ENCODE measurements at regions of chr2 and their contacts with region 1.

Region 1: GRCh38 chr2:206765242-206766056 is at the starts of genes FASTKD2 and MDH1B:
- DNase-seq: peak; percentile 62 to 91 (median 85)
- ATAC-seq: peak; percentile 93
- H3K4me3 ChIP-seq: peak within 1 kb of the TSS; percentile 70
- H3K4me3 Mint-ChIP-seq: peak within 1 kb of the TSS in 8 of 10 donors; percentile 89 to 96 (median 94)
- H3K27ac ChIP-seq: peak within 1 kb of the TSS; percentile 95
- H3K27ac Mint-ChIP-seq: peak within 1 kb of the TSS; percentile 93 to 99 (median 97)
- H3K4me1 ChIP-seq: peaks cover 12 to 16% of the 10 kb centered on the region in 2 donors
- H3K4me1 Mint-ChIP-seq: peaks cover 13 to 46% (median 41%) of the 10 kb centered on the region in 7 donors
- H3K27me3 ChIP-seq: no peaks in the 10 kb centered on the region
- H3K27me3 Mint-ChIP-seq: peaks cover 0 to 4% (median 0%) of the 10 kb centered on the region in 5 donors
- total RNA-seq, gene FASTKD2: 16.5 to 31.9 (median 24.5) TPM
- total RNA-seq, gene MDH1B: 0.17 to 0.54 (median 0.24) TPM in 4 of 5 experiments, not detected in the other

Region 2: DNA sequence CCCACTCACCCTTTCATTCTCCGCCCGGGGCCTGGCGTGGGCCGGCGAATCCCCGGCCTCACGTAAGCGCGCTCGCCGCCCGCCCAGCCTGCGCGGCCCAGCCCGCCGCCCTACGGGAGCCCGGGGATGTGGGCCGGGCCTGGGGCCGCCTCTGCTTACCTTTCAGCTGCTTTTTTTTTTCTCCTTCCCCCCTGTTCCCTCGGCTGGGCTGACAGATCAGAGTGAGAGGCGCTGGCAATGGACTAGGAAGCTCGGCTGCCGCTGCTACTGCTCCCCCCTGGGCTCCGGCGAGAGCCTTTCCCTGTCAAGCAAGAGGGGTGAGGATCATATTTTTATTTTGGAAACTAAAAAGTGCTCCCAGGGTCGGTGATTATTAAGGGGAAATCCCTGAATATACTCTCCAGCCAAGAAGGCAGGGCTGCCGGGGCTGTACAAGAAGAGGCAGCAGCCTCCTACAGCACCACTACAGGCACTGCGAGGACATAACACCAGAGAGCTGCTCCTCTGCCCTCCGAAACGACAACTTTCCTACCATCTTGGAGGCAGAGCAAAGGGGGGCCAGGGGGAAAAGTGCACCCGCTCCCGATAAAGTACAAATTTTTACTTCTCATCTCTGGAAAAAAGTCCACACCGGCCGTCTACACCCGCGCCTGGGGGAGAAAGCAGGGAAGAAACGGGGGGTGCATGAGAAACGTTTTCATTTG is 679.6 kb before region 1 on chr2 and contains the start of gene INO80D:
- CTCF ChIA-PET with region 1: no interaction called
- POLR2A ChIA-PET with region 1: interaction called, 3 read pairs
- intact Hi-C with region 1: loop called (anchors 5 to 10 kb)
- DNase-seq: peak; percentile 71 to 92 (median 90)
- ATAC-seq: peak; percentile 95
- H3K4me3 ChIP-seq: peak within 1 kb of the TSS; percentile 97
- H3K4me3 Mint-ChIP-seq: peak within 1 kb of the TSS; percentile 96 to 99 (median 98)
- H3K27ac ChIP-seq: peak within 1 kb of the TSS; percentile 97
- H3K27ac Mint-ChIP-seq: peak within 1 kb of the TSS; percentile 98 to 100 (median 100)
- H3K4me1 ChIP-seq: peaks cover 0 to 9% of the 10 kb centered on the region in 2 donors
- H3K4me1 Mint-ChIP-seq: peaks cover 25 to 61% (median 47%) of the 10 kb centered on the region in 7 donors
- H3K27me3 ChIP-seq: no peaks in the 10 kb centered on the region
- H3K27me3 Mint-ChIP-seq: no peaks in the 10 kb centered on the region
- total RNA-seq, gene INO80D: 30.7 to 50.9 (median 43.4) TPM

Region 3: GRCh38 chr2:206274434-206275268 is 490.8 kb before region 1 on chr2 and contains the start of gene ZDBF2:
- CTCF ChIA-PET with region 1: no interaction called
- POLR2A ChIA-PET with region 1: no interaction called
- intact Hi-C with region 1: loop called (anchors 1 to 10 kb)
- DNase-seq: peak; percentile 29 to 70 (median 62)
- ATAC-seq: peak; percentile 80
- H3K4me3 ChIP-seq: peak within 1 kb of the TSS; percentile 56
- H3K4me3 Mint-ChIP-seq: peak within 1 kb of the TSS; percentile 85 to 94 (median 91)
- H3K27ac ChIP-seq: peak within 1 kb of the TSS; percentile 79
- H3K27ac Mint-ChIP-seq: peak within 1 kb of the TSS; percentile 85 to 96 (median 94)
- H3K4me1 ChIP-seq: peaks cover 8 to 14% of the 10 kb centered on the region in 2 donors
- H3K4me1 Mint-ChIP-seq: peaks cover 9 to 25% (median 20%) of the 10 kb centered on the region in 7 donors
- H3K27me3 ChIP-seq: peaks cover 0 to 6% of the 10 kb centered on the region in 2 donors
- H3K27me3 Mint-ChIP-seq: peaks cover 14 to 69% (median 51%) of the 10 kb centered on the region in 5 donors
- total RNA-seq, gene ZDBF2: 9.1 to 22.4 (median 16.0) TPM

Region 4: DNA sequence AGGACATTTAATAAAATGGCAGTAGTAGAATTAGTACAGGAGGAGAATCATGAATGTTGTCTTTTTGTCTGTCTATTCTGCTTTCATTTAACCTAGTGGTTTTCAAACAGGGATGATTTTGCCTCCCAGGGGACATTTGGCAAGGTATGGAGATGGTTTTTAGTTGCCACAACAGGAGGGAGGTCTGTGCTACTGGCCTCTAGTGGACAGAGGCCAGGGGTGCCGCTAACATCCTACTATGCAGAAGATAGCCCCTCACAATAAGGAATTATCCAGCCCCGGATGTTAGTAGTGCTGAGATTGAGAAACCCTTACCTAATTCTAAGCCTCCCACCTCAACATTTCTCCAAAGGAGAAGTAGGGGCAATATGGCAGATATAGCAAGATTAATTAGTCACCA is 18.3 kb after region 1 on chr2:
- CTCF ChIA-PET with region 1: no interaction called
- POLR2A ChIA-PET with region 1: interaction called, 13 read pairs
- intact Hi-C with region 1: loop called in 1 of 2 experiments (anchors 2 kb)
- DNase-seq: no peak
- ATAC-seq: peak; percentile 36
- H3K4me3 ChIP-seq: no peak overlapping the region
- H3K4me3 Mint-ChIP-seq: no peak overlapping the region
- H3K27ac ChIP-seq: no peak overlapping the region
- H3K27ac Mint-ChIP-seq: peak overlapping the region in 2 of 9 donors; percentile 22 to 58
- H3K4me1 ChIP-seq: no peaks in the 10 kb centered on the region
- H3K4me1 Mint-ChIP-seq: peaks cover 3 to 30% (median 19%) of the 10 kb centered on the region in 7 donors
- H3K27me3 ChIP-seq: no peaks in the 10 kb centered on the region
- H3K27me3 Mint-ChIP-seq: no peaks in the 10 kb centered on the region

Region 5: DNA sequence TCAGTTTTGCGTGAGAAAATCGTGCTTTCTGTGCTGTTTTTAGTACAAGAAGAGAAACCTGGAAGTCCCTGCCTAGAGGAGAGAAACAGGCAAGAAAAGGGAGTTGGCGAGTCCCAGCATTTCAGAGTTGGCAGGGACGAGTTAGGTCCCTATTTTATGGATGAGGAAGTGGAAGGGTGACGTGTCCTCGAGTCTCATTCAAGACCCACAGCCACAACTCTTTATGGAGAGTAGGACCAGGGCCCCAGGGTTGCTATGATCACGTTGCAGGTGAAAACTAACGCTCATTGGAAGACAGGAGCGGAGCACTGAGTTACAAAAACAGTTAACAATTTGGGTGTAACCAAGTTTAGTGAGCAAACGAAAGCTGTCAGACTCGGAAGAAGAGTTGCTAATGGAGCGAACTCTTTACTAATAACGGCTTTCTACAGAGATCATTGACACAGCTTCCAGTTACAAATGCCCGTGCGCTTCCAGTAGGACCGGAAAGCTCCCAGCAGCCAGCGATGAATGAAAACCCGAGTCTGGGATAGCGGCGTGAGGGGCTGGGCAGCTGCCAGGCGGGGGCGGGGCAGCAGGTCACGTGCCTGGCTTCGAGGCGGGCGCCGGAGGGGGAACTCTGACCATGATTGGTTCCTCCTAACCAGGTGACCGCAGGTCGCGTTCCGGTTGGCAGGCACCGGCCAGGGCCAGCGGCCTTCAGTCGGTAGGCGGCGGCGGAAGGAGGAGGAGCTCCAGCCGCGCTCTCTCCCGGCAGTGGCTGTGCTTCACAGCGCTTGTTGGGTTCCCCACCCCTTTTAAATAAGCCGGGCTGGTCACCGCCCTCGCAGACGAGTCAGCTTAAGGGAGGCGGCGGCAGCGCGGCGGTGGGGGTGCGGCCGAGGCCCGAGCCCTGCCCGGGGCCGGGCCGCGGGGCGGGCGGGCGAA is 945.6 kb after region 1 on chr2 and contains the start of gene CCNYL1:
- CTCF ChIA-PET with region 1: no interaction called
- POLR2A ChIA-PET with region 1: no interaction called
- intact Hi-C with region 1: loop called (anchors 1 kb)
- DNase-seq: peak; percentile 93 to 98 (median 97)
- ATAC-seq: peak; percentile 98
- H3K4me3 ChIP-seq: peak within 1 kb of the TSS; percentile 88
- H3K4me3 Mint-ChIP-seq: peak within 1 kb of the TSS; percentile 94 to 99 (median 97)
- H3K27ac ChIP-seq: peak within 1 kb of the TSS; percentile 83
- H3K27ac Mint-ChIP-seq: peak within 1 kb of the TSS; percentile 83 to 98 (median 93)
- H3K4me1 ChIP-seq: peaks cover 4 to 11% of the 10 kb centered on the region in 2 donors
- H3K4me1 Mint-ChIP-seq: peaks cover 15 to 32% (median 27%) of the 10 kb centered on the region in 7 donors
- H3K27me3 ChIP-seq: no peaks in the 10 kb centered on the region
- H3K27me3 Mint-ChIP-seq: peaks cover 0 to 3% (median 0%) of the 10 kb centered on the region in 5 donors
- total RNA-seq, gene CCNYL1: 6.7 to 16.7 (median 10.7) TPM

Region 6: DNA sequence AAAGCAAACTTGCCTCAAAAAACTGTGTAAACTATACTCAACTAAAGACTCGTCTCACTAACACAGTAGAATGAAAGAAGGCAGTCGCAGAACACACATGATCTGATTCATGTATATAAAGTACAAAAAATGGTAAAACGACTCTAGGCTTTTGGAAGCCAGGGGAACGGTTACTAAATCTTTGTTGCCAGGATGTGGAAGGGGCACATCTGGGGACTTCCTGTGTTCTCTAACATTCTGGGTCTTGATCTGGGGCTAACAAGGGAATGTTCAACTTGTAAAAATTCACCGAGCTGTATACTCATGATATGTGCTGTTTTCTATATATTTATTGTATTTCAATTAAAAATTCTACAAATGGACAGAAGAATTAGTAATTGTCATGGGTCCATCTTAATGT is 1438.7 kb after region 1 on chr2:
- CTCF ChIA-PET with region 1: no interaction called
- POLR2A ChIA-PET with region 1: no interaction called
- intact Hi-C with region 1: no loop called
- DNase-seq: peak in 1 of 9 donors; percentile 2
- ATAC-seq: no peak
- H3K4me3 ChIP-seq: no peak overlapping the region
- H3K4me3 Mint-ChIP-seq: peak overlapping the region in 1 of 10 donors; percentile 7
- H3K27ac ChIP-seq: no peak overlapping the region
- H3K27ac Mint-ChIP-seq: no peak overlapping the region
- H3K4me1 ChIP-seq: no peaks in the 10 kb centered on the region
- H3K4me1 Mint-ChIP-seq: peaks cover 0 to 8% (median 7%) of the 10 kb centered on the region in 7 donors
- H3K27me3 ChIP-seq: no peaks in the 10 kb centered on the region
- H3K27me3 Mint-ChIP-seq: no peaks in the 10 kb centered on the region

Region 7: GRCh38 chr2:208254871-208255556 is 1489.6 kb after region 1 on chr2 and contains the start of gene IDH1:
- CTCF ChIA-PET with region 1: no interaction called
- POLR2A ChIA-PET with region 1: no interaction called
- intact Hi-C with region 1: loop called in 1 of 2 experiments (anchors 1 kb)
- DNase-seq: peak; percentile 79 to 97 (median 88)
- ATAC-seq: peak; percentile 95
- H3K4me3 ChIP-seq: peak within 1 kb of the TSS; percentile 70
- H3K4me3 Mint-ChIP-seq: peak within 1 kb of the TSS; percentile 93 to 100 (median 97)
- H3K27ac ChIP-seq: peak within 1 kb of the TSS; percentile 62
- H3K27ac Mint-ChIP-seq: peak within 1 kb of the TSS; percentile 47 to 91 (median 79)
- H3K4me1 ChIP-seq: peaks cover 0 to 9% of the 10 kb centered on the region in 2 donors
- H3K4me1 Mint-ChIP-seq: peaks cover 8 to 28% (median 23%) of the 10 kb centered on the region in 7 donors
- H3K27me3 ChIP-seq: no peaks in the 10 kb centered on the region
- H3K27me3 Mint-ChIP-seq: peaks cover 0 to 3% (median 0%) of the 10 kb centered on the region in 5 donors
- total RNA-seq, gene IDH1: 5.0 to 26.4 (median 20.4) TPM

Measured in naive thymus-derived CD4-positive, alpha-beta T cell (primary cell).